ENCODE measurements at regions of chr14 and their contacts with region 1.

Region 1: DNA sequence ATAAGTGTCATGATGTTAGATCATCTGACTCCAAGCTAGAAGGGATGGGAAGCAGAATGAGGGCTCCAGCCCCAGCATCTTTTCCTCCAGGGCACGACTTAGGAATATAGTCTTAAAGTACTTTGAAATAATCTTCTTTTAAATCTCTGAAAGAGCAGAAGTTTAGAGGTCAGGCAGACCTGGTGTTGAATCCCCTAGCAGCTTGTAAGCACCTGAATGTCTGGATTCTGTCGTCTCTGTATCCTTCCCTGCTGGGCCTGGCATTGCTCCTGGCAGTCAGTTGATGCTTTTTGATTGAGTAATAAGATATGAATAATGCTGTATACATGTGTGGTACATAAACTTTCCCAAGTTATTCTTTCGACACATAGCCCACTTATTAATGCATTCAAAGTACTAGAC is 31.3 kb downstream of the EVL start:
- DNase-seq: no peak
- ATAC-seq: no peak
- H3K4me3 Mint-ChIP-seq: no peak overlapping the region
- H3K27ac Mint-ChIP-seq: peak overlapping the region; percentile 69
- H3K4me1 Mint-ChIP-seq: peaks cover 93% of the 10 kb centered on the region
- H3K27me3 Mint-ChIP-seq: no peaks in the 10 kb centered on the region

Region 2: GRCh38 chr14:100078991-100079725 is 17.4 kb before region 1 on chr14:
- CTCF ChIA-PET with region 1: interaction called, 300 read pairs
- POLR2A ChIA-PET with region 1: interaction called, 162 read pairs
- intact Hi-C with region 1: no loop called
- DNase-seq: peak; percentile 87
- ATAC-seq: peak; percentile 50
- H3K4me3 Mint-ChIP-seq: peak overlapping the region; percentile 57
- H3K27ac Mint-ChIP-seq: peak overlapping the region; percentile 91
- H3K4me1 Mint-ChIP-seq: peaks cover 97% of the 10 kb centered on the region
- H3K27me3 Mint-ChIP-seq: no peaks in the 10 kb centered on the region

Region 3: GRCh38 chr14:100115726-100116125 is 19.2 kb after region 1 on chr14:
- CTCF ChIA-PET with region 1: no interaction called
- POLR2A ChIA-PET with region 1: no interaction called
- intact Hi-C with region 1: no loop called
- DNase-seq: no peak
- ATAC-seq: no peak
- H3K4me3 Mint-ChIP-seq: no peak overlapping the region
- H3K27ac Mint-ChIP-seq: peak overlapping the region; percentile 29
- H3K4me1 Mint-ChIP-seq: peaks cover 39% of the 10 kb centered on the region
- H3K27me3 Mint-ChIP-seq: no peaks in the 10 kb centered on the region

Measured in activated CD4-positive, alpha-beta T cell treated with anti-CD3 and anti-CD28 coated beads for 36 hours (primary cell).